ENCODE measurements at regions of chr9 and their contacts with region 1.

Region 1: DNA sequence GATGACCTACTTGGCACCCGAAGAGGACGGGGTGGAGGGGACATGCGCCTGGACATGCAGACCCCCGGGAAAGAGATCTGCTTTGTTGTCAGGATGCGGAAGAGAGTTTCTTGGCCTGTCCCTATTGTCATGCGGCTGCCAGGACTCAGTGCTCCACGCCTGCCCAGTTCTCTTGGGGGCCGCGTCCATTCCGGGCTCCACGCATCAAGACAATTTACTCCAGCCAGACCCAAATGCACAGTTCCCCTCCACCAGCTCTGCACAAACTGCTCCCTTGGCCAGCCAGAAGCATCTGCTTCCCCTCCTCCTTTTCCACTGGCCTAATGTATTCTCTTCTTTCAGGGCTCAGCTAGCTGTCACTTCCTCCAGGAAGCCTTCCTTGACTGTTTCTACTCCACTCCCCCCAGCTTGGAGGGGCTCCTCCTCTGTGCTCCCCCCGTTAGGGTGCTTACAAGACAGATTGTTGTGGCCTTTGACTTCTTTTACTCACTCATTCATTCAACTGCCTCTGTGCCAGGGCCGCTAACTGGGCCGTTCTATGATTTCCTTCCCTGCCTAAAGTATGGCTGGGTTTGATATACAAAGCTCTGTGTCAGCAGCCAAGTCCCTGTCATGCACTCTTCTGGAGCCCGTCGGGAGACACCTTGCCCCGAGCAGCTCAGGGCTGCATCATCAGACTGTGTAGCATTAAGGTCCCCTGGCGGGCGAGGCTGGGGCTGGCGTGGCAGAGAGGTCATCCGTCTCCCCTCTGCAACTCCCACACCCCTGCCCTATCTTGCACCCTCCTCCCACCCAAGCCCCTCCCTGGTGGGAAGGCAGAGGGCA is 6.6 kb downstream of the FIBCD1 start:
- DNase-seq: peak in 2 of 7 donors; percentile 49 to 58
- H3K4me3 ChIP-seq: no peak overlapping the region
- H3K27ac ChIP-seq: peak overlapping the region in 1 of 5 donors; percentile 49
- H3K4me1 ChIP-seq: peaks cover 36 to 42% of the 10 kb centered on the region in 2 donors
- H3K27me3 ChIP-seq: peaks cover 4% of the 10 kb centered on the region
- CTCF ChIP-seq: peak in 1 of 6 experiments; percentile 11
- POLR2A ChIP-seq: no peak

Region 2: GRCh38 chr9:130884980-130885696 is 47.3 kb before region 1 on chr9:
- intact Hi-C with region 1: loop called in 1 of 2 experiments (anchors 5 kb)
- DNase-seq: peak in 2 of 7 donors; percentile 31 to 53
- H3K4me3 ChIP-seq: no peak overlapping the region
- H3K27ac ChIP-seq: peak overlapping the region; percentile 36 to 85 (median 54)
- H3K4me1 ChIP-seq: no peaks in the 10 kb centered on the region
- H3K27me3 ChIP-seq: no peaks in the 10 kb centered on the region
- CTCF ChIP-seq: no peak
- POLR2A ChIP-seq: no peak

Region 3: GRCh38 chr9:131167146-131167692 is 234.8 kb after region 1 on chr9:
- intact Hi-C with region 1: no loop called
- DNase-seq: no peak
- H3K4me3 ChIP-seq: no peak overlapping the region
- H3K27ac ChIP-seq: no peak overlapping the region
- H3K4me1 ChIP-seq: no peaks in the 10 kb centered on the region
- H3K27me3 ChIP-seq: no peaks in the 10 kb centered on the region
- CTCF ChIP-seq: no peak
- POLR2A ChIP-seq: no peak

Region 4: DNA sequence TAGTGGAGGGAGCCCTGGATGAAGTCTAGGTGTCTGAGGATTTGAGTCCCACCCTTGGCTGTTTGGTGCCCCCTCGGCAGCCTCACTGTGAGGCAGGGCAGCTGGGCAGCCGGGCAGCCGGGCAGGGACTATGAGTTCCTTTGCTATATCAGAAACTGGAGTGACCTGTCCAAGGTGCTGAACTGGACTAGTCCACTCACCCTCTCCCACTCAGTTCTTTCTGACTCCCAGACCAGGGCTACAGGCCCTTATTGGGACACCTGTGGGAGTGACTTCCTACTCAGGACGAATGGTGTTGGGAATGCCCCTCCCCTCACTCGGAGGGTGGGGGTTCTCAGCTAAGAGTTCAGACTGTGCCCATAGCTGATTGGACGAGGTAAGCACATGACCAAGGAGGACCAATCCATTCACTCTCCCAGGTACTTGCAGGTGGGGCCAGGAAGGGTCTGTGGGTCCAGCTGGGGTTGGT is 841.5 kb after region 1 on chr9:
- intact Hi-C with region 1: no loop called
- DNase-seq: peak in 6 of 7 donors; percentile 32 to 73 (median 68)
- H3K4me3 ChIP-seq: no peak overlapping the region
- H3K27ac ChIP-seq: no peak overlapping the region
- H3K4me1 ChIP-seq: no peaks in the 10 kb centered on the region
- H3K27me3 ChIP-seq: peaks cover 4% of the 10 kb centered on the region
- CTCF ChIP-seq: no peak
- POLR2A ChIP-seq: no peak